ENCODE measurements at regions of chr12 and their contacts with region 1.

Region 1: GRCh38 chr12:48739618-48740273 is 23.2 kb upstream of the CCNT1 start:
- DNase-seq: no peak
- H3K4me3 ChIP-seq: no peak overlapping the region
- H3K27ac ChIP-seq: no peak overlapping the region
- H3K4me1 ChIP-seq: no peaks in the 10 kb centered on the region
- H3K27me3 ChIP-seq: 0 out of 2 replicates have a peak, but pooled peaks cover 6% of the 10 kb centered on the region
- CTCF ChIP-seq: no peak

Region 2: DNA sequence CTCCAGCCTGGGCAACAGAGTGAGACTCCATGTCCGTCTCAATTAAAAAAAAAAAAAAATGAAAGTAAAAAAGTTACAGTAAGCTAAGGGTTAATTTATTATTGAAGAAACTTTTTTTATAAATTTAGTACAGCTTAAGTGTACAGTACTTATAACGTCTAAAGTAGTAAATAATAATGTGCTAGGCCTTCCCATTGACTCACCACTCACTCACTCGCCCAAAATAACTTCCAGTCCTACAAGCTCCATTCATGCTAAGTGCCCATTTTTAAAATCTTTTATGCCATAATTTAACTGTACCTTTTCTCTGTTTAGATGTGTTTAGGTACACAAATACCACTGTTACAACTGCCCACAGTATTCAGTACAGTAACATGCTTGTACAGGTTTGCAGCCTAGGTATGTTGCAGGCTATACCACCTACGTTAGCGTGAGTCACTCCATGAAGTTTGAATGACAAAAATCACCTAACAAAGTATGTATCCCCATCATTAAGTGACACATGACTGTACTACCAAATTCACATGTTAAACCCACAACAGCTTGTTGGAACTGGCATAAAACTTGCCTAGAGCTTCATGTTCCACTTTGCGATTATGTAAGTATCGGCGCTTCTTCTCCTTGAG is 68.4 kb before region 1 on chr12:
- CTCF ChIA-PET with region 1: no interaction called
- POLR2A ChIA-PET with region 1: interaction called, 13 read pairs
- intact Hi-C with region 1: no loop called
- DNase-seq: no peak
- H3K4me3 ChIP-seq: no peak overlapping the region
- H3K27ac ChIP-seq: no peak overlapping the region
- H3K4me1 ChIP-seq: no peaks in the 10 kb centered on the region
- H3K27me3 ChIP-seq: no peaks in the 10 kb centered on the region
- CTCF ChIP-seq: no peak